Posterior vena cava (tissue), 2 donors: ENCODE measurements at regions of chr21 and their contacts with region 1.

Region 1: GRCh38 chr21:19969156-19969555 is 1029.1 kb upstream of the NCAM2 start:
- DNase-seq: no peak

Region 2: DNA sequence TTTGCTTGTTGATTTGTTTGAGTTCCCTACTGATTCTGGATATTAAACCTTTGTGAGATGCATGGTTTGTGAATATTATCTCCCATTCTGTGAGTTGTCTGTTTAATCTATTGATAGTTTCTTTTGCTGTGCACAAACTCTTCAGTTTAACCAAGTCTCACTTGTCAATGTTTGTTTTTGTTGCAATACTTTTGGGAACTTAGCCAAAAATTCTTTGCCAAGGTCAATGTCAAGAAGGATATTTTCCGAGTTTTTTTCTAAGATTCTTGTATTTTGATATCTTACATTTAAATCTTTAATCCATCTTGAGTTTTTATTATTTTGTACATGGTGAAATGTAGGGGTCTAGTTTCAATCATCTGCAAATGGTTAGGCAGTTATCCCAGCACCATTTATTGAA is 201.6 kb before region 1 on chr21:
- intact Hi-C with region 1: no loop called
- DNase-seq: no peak

Region 3: DNA sequence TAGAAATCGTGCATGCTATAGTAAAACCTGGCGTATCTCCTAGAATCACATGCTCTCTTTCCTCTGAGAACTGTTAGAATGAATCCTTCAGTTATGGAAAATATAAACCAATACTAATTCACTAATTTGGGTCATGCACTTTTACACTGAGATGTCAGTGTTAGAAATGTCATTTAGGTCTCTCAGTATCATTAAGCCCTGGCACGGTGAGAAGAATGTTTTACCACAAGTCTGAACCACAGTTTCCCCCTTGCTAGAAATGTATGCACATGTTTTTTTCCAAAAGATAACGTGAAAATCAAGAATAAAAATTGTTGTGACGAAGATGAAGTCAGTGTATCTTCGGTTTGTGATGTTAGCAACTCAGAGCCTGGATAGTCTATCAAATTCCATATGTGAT is 33.7 kb before region 1 on chr21:
- intact Hi-C with region 1: no loop called
- DNase-seq: no peak

Region 4: DNA sequence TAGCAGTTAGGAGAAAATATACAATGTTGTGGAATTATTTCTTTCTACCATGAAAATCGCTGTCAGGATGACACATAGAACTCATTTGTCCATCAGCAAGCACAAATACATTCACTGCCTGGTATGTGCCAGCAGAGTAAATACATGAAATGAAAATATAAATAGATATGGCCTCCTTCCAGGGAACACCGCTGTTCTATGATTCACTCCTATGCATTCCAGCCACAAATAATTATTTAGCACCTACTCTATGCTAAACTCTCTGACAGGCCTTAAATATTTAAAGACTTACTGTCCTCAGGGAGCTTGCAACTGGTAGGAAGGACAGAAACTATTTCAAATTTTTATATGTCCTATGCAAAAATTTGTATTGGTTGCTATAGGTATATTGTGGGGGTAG is 54.0 kb after region 1 on chr21:
- intact Hi-C with region 1: loop called in 1 of 2 experiments (anchors 10 kb)
- DNase-seq: no peak